ENCODE measurements at regions of chr10 and their contacts with region 1.

Region 1: GRCh38 chr10:68364101-68364886 is 31.6 kb upstream of the PBLD start:
- DNase-seq: no peak
- H3K4me3 Mint-ChIP-seq: no peak overlapping the region
- H3K27ac Mint-ChIP-seq: no peak overlapping the region
- H3K4me1 Mint-ChIP-seq: peaks cover 6% of the 10 kb centered on the region
- H3K27me3 Mint-ChIP-seq: no peaks in the 10 kb centered on the region
- CTCF ChIP-seq: no peak

Region 2: GRCh38 chr10:68348265-68348741 is 16.0 kb before region 1 on chr10:
- CTCF ChIA-PET with region 1: interaction called, 23 read pairs
- POLR2A ChIA-PET with region 1: interaction called, 5 read pairs
- intact Hi-C with region 1: no loop called
- DNase-seq: peak; percentile 60
- H3K4me3 Mint-ChIP-seq: no peak overlapping the region
- H3K27ac Mint-ChIP-seq: no peak overlapping the region
- H3K4me1 Mint-ChIP-seq: no peaks in the 10 kb centered on the region
- H3K27me3 Mint-ChIP-seq: no peaks in the 10 kb centered on the region
- CTCF ChIP-seq: peak; percentile 58

Region 3: GRCh38 chr10:68402276-68402675 is 38.0 kb after region 1 on chr10:
- CTCF ChIA-PET with region 1: no interaction called
- POLR2A ChIA-PET with region 1: no interaction called
- intact Hi-C with region 1: no loop called
- DNase-seq: no peak
- H3K4me3 Mint-ChIP-seq: no peak overlapping the region
- H3K27ac Mint-ChIP-seq: no peak overlapping the region
- H3K4me1 Mint-ChIP-seq: peaks cover 11% of the 10 kb centered on the region
- H3K27me3 Mint-ChIP-seq: no peaks in the 10 kb centered on the region
- CTCF ChIP-seq: no peak